Psoas muscle (tissue), 8 donors: ENCODE measurements at regions of chr10 and their contacts with region 1.

Region 1: DNA sequence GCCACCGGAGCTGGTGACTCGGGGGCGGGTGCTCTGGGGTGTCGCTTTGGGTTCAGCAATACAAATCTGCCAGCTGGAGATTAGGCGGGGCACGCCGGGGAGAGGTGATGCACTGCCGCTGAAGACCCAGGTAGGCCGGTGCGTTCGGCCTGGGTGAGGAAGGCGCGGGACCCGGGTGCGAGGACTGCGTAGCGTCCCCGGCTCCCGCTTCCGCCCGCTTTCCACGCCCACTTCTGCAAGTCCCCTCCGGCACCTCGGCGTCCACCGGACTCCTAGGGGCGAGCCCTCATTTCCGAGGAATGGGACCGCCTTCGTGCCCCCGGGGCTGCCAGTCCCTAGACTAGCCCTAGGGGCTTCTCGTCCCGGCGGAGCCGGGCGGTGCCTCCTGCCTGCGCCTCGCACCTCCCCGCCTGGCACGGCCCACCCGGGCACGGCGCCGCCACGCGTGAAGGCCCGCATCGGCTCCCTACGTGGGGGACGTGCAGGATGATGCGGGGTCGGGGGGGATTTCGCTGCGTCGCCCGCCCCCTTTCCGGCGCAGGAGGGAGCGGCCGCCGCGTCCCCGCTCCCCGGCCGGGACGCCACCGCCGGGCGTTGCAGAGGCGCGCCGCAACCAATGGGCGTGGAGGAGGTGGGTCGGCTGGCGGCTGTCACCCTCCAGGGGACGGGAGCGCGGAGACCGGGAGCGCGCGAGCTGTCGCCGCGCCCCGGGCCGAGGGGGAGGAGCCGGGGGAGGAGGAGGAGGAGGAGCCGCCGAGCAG is 40.0 kb downstream of the HK1 start:
- DNase-seq: peak; percentile 91 to 96
- ATAC-seq: peak; percentile 92 to 96 (median 93)
- H3K4me3 ChIP-seq: peak overlapping the region; percentile 95
- H3K27ac ChIP-seq: peak overlapping the region; percentile 92
- H3K4me1 ChIP-seq: peaks cover 38% of the 10 kb centered on the region
- H3K27me3 ChIP-seq: no peaks in the 10 kb centered on the region
- CTCF ChIP-seq: no peak

Region 2: DNA sequence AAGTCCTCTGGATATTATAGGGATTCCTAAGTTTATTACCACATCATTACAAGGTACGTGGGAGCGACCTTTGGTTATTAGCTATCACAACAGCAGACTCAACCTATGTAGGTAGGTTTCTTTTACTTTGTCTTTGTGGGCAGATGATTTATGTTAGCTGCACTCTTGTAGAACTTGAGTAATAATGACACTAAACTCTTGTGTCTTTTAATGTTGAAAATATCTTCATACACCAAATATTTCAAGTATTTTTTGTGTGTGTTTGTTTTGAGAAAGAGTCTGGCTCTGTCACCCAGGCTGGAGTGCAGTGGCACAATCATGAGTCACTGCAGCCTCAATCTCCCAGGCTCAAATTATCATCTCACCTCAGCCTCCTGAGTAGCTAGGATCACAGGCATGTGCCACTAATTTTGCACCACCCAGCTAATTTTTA is 157.5 kb before region 1 on chr10:
- intact Hi-C with region 1: no loop called
- DNase-seq: no peak
- ATAC-seq: no peak
- H3K4me3 ChIP-seq: no peak overlapping the region
- H3K27ac ChIP-seq: no peak overlapping the region
- H3K4me1 ChIP-seq: no peaks in the 10 kb centered on the region
- H3K27me3 ChIP-seq: no peaks in the 10 kb centered on the region
- CTCF ChIP-seq: no peak

Region 3: GRCh38 chr10:69248117-69248730 is 70.1 kb before region 1 on chr10:
- intact Hi-C with region 1: loop called in 1 of 2 experiments (anchors 5 kb)
- DNase-seq: no peak
- ATAC-seq: no peak
- H3K4me3 ChIP-seq: no peak overlapping the region
- H3K27ac ChIP-seq: no peak overlapping the region
- H3K4me1 ChIP-seq: no peaks in the 10 kb centered on the region
- H3K27me3 ChIP-seq: no peaks in the 10 kb centered on the region
- CTCF ChIP-seq: no peak

Region 4: GRCh38 chr10:69360485-69361324 is 42.4 kb after region 1 on chr10:
- intact Hi-C with region 1: loop called (anchors 5 kb)
- DNase-seq: peak; percentile 80 to 90
- ATAC-seq: peak; percentile 70 to 77 (median 76)
- H3K4me3 ChIP-seq: peak overlapping the region; percentile 34
- H3K27ac ChIP-seq: peak overlapping the region; percentile 93
- H3K4me1 ChIP-seq: peaks cover 59% of the 10 kb centered on the region
- H3K27me3 ChIP-seq: no peaks in the 10 kb centered on the region
- CTCF ChIP-seq: no peak

Region 5: GRCh38 chr10:69375307-69376151 is 57.2 kb after region 1 on chr10:
- intact Hi-C with region 1: loop called in 1 of 2 experiments (anchors 5 kb)
- DNase-seq: peak; percentile 43 to 84
- ATAC-seq: peak; percentile 88 to 97 (median 90)
- H3K4me3 ChIP-seq: peak overlapping the region; percentile 34
- H3K27ac ChIP-seq: peak overlapping the region; percentile 78
- H3K4me1 ChIP-seq: peaks cover 50% of the 10 kb centered on the region
- H3K27me3 ChIP-seq: no peaks in the 10 kb centered on the region
- CTCF ChIP-seq: no peak

Region 6: DNA sequence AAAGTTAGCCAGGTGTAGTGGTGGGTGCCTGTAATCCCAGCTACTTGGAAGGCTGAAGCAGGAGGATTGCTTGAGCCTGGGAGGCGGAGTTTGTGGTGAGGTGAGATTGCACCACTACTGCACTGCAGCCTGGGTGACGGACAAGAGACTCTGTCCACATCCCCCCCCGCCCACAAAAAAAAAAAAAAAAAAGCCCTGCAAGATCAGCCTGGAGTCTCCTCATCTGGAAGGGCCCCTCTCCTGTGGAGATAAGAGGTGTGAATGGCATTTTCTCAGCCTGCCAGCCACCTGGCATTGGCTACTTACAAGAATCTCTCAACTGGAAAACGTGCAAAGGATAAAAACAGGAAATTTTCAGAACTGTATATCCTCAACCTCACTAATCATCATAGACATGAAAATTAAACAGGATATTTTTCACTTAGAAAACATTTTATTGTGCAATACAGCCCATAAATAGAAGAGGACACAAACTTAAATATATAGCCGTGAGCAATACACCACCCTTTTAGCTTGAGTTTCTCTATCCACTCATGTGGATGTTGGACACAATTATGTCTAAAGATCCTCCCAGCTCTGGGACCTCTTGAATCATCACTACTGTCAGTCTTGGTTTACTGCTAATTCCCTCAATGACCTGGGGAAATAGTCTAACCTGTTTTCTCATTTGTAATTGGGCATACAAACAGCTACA is 121.7 kb after region 1 on chr10:
- intact Hi-C with region 1: no loop called
- DNase-seq: no peak
- ATAC-seq: peak; percentile 61 to 78 (median 76)
- H3K4me3 ChIP-seq: no peak overlapping the region
- H3K27ac ChIP-seq: peak overlapping the region; percentile 81
- H3K4me1 ChIP-seq: peaks cover 24% of the 10 kb centered on the region
- H3K27me3 ChIP-seq: no peaks in the 10 kb centered on the region
- CTCF ChIP-seq: no peak

Region 7: DNA sequence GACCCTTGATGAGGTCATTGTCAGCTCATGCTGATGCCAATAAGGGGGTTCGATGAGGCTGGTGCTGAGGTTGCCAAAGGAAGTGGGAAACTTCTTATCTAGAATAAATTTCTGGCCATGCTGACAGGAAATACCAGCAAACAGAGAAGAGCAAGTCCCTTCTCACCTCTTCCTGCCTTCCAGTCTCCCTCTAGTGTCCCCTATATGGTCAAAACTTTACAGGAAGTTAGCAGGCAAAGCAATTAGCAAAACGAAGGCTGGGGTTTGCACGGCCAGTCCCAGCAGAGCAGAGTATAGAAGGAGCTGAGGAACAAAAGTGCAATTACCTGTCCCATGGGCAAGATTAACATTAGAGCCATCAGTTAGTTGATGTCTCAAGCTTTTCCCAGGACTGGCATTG is 270.1 kb after region 1 on chr10:
- intact Hi-C with region 1: no loop called
- DNase-seq: no peak
- ATAC-seq: no peak
- H3K4me3 ChIP-seq: no peak overlapping the region
- H3K27ac ChIP-seq: no peak overlapping the region
- H3K4me1 ChIP-seq: no peaks in the 10 kb centered on the region
- H3K27me3 ChIP-seq: no peaks in the 10 kb centered on the region
- CTCF ChIP-seq: no peak